CD8-positive, alpha-beta T cell (primary cell): ENCODE measurements at regions of chr2 and their contacts with region 1.

Region 1: DNA sequence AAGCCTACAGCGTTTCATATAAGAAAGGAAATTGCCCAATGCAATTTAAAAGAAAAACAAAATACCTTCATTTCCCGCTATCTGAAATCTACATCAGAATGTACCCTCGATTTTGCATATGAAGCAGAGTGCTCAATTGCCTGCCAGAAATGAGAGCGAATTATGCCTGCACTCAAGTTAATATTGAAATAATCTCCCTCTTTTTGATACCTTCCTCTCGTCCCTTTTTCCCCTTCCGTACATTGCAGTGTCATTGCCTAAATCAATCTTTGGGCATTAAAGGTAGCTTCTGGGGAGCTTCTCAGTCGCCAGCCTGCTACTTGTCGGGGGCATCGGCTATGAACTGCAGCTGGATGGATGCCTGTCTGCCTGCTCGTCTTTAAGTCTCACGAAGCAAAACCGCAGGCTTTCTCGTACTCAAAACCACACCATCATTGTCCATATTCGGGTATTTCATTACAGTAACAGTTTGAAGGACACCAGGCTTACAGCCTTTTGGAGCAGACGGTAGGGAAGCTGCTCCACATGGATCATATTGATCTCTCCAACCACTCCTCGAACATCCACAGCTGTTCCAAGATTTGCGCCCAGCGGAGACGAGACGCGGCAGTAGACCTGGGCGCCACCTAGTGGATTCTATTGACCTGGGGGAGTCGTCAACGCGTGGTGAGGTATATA is 64.0 kb upstream of the HNRNPA3 start:
- DNase-seq: peak; percentile 47 to 84 (median 75)
- ATAC-seq: peak; percentile 89
- H3K4me3 ChIP-seq: peak overlapping the region; percentile 58 to 69
- H3K4me3 Mint-ChIP-seq: peak overlapping the region; percentile 86
- H3K27ac ChIP-seq: no peak overlapping the region
- H3K27ac Mint-ChIP-seq: no peak overlapping the region
- H3K4me1 ChIP-seq: peaks cover 11% of the 10 kb centered on the region
- H3K4me1 Mint-ChIP-seq: peaks cover 14% of the 10 kb centered on the region
- H3K27me3 ChIP-seq: peaks cover 6 to 14% of the 10 kb centered on the region in 2 experiments
- H3K27me3 Mint-ChIP-seq: peaks cover 29% of the 10 kb centered on the region
- CTCF ChIP-seq: peak; percentile 94

Region 2: DNA sequence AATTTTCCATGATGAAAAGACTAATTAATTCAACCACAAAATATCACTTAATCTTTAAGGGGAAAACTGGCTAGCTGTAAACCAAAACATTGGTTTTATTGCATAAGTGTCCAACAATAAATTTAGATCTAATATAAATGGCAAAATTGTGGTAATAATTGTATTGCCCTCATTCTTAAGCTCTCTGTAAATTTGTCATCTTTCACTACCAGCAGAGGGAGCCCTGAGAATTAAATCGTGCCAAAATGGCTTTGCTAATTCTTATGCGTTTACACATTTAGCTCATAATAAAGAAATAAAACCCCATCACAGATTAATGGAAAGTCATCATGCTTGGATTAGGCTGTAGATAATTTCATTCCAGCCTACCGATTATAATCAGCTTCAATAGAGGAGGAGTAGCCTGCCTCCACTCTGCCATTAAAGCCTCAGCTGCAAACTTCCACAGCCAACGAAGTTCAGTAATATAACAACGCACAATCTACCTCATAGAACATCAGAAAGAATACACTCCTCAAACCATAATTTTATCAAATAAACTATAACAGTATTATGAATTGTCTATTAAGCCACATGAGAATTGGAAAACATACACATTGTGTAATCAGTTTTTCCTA is 1897.1 kb before region 1 on chr2:
- CTCF ChIA-PET with region 1: no interaction called
- POLR2A ChIA-PET with region 1: no interaction called
- intact Hi-C with region 1: loop called in 1 of 2 experiments (anchors 5 kb)
- DNase-seq: peak in 3 of 9 experiments; percentile 5 to 43 (median 24)
- ATAC-seq: no peak
- H3K4me3 ChIP-seq: no peak overlapping the region
- H3K4me3 Mint-ChIP-seq: no peak overlapping the region
- H3K27ac ChIP-seq: no peak overlapping the region
- H3K27ac Mint-ChIP-seq: no peak overlapping the region
- H3K4me1 ChIP-seq: no peaks in the 10 kb centered on the region
- H3K4me1 Mint-ChIP-seq: peaks cover 4% of the 10 kb centered on the region
- H3K27me3 ChIP-seq: peaks cover 0 to 2% of the 10 kb centered on the region in 2 experiments
- H3K27me3 Mint-ChIP-seq: peaks cover 25% of the 10 kb centered on the region
- CTCF ChIP-seq: peak; percentile 49

Region 3: GRCh38 chr2:176001916-176002687 is 1146.5 kb before region 1 on chr2 and contains the start of gene LNPK:
- CTCF ChIA-PET with region 1: no interaction called
- POLR2A ChIA-PET with region 1: no interaction called
- intact Hi-C with region 1: loop called in 1 of 2 experiments (anchors 10 kb)
- DNase-seq: peak; percentile 84 to 95 (median 92)
- ATAC-seq: peak; percentile 88
- H3K4me3 ChIP-seq: peak within 1 kb of the TSS; percentile 69 to 79
- H3K4me3 Mint-ChIP-seq: peak within 1 kb of the TSS; percentile 90
- H3K27ac ChIP-seq: peak within 1 kb of the TSS; percentile 63 to 71
- H3K27ac Mint-ChIP-seq: peak within 1 kb of the TSS; percentile 97
- H3K4me1 ChIP-seq: peaks cover 10% of the 10 kb centered on the region
- H3K4me1 Mint-ChIP-seq: peaks cover 31% of the 10 kb centered on the region
- H3K27me3 ChIP-seq: no peaks in the 10 kb centered on the region
- H3K27me3 Mint-ChIP-seq: no peaks in the 10 kb centered on the region
- CTCF ChIP-seq: no peak
- total RNA-seq, gene LNPK: 16.9 TPM

Region 4: GRCh38 chr2:176280867-176281658 is 867.6 kb before region 1 on chr2:
- CTCF ChIA-PET with region 1: no interaction called
- POLR2A ChIA-PET with region 1: no interaction called
- intact Hi-C with region 1: loop called in 1 of 2 experiments (anchors 10 kb)
- DNase-seq: no peak
- ATAC-seq: no peak
- H3K4me3 ChIP-seq: no peak overlapping the region
- H3K4me3 Mint-ChIP-seq: no peak overlapping the region
- H3K27ac ChIP-seq: no peak overlapping the region
- H3K27ac Mint-ChIP-seq: no peak overlapping the region
- H3K4me1 ChIP-seq: peaks cover 17% of the 10 kb centered on the region
- H3K4me1 Mint-ChIP-seq: peaks cover 47% of the 10 kb centered on the region
- H3K27me3 ChIP-seq: no peaks in the 10 kb centered on the region
- H3K27me3 Mint-ChIP-seq: no peaks in the 10 kb centered on the region
- CTCF ChIP-seq: no peak

Region 5: DNA sequence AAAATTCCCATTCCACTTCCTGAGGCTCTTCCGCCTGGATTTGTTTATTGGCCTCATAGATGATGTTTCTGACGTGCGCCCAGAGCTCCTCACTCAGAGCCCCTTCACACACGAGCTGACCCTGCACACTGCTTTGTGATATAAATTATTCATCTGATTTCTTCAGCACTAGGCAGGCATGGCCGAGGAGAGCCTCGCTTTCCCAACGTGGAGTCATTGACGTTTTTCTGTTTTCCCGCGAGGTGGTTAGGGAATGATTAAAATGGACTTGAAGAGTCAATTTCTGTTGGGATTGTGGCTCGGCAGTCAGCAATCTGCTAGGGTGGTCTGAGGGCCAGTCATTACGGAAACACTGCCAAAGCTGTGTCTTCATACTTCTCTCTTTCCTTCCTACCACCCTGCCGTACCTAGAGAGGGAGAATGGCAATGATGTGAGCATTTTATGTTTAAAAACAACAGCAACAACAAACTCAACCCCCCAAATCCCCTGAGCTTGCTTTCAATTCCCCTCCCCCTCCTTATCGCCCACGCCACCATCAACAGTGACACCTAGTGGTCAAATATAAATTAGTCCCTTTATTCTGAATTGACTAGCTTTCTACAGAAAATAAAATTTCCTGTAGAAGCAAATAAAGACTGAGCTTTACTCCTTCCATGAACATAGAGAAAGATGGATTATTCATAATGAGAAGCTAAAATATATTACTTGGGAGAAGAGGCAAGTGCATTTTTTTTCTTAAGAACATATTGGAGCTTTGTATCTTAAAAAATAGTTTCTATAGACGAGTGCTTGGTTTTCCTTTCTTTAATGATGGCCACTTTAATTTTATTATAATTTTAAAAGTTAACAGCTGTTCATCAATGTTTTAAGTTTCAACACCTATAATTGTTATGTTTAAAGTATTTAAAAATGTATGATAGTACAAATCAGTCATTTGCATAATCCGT is 594.2 kb before region 1 on chr2:
- CTCF ChIA-PET with region 1: no interaction called
- POLR2A ChIA-PET with region 1: no interaction called
- intact Hi-C with region 1: loop called in 1 of 2 experiments (anchors 5 kb)
- DNase-seq: peak in 6 of 9 experiments; percentile 16 to 72 (median 40)
- ATAC-seq: peak; percentile 59
- H3K4me3 ChIP-seq: peak overlapping the region; percentile 47 to 51
- H3K4me3 Mint-ChIP-seq: peak overlapping the region; percentile 84
- H3K27ac ChIP-seq: no peak overlapping the region
- H3K27ac Mint-ChIP-seq: no peak overlapping the region
- H3K4me1 ChIP-seq: no peaks in the 10 kb centered on the region
- H3K4me1 Mint-ChIP-seq: peaks cover 11% of the 10 kb centered on the region
- H3K27me3 ChIP-seq: peaks cover 3% of the 10 kb centered on the region in 2 experiments
- H3K27me3 Mint-ChIP-seq: peaks cover 42% of the 10 kb centered on the region
- CTCF ChIP-seq: peak; percentile 77

Region 6: GRCh38 chr2:176745543-176746200 is 402.9 kb before region 1 on chr2:
- CTCF ChIA-PET with region 1: interaction called, 3 read pairs
- POLR2A ChIA-PET with region 1: no interaction called
- intact Hi-C with region 1: loop called in 1 of 2 experiments (anchors 2 kb)
- DNase-seq: no peak
- ATAC-seq: no peak
- H3K4me3 ChIP-seq: no peak overlapping the region
- H3K4me3 Mint-ChIP-seq: no peak overlapping the region
- H3K27ac ChIP-seq: no peak overlapping the region
- H3K27ac Mint-ChIP-seq: no peak overlapping the region
- H3K4me1 ChIP-seq: no peaks in the 10 kb centered on the region
- H3K4me1 Mint-ChIP-seq: peaks cover 6% of the 10 kb centered on the region
- H3K27me3 ChIP-seq: no peaks in the 10 kb centered on the region
- H3K27me3 Mint-ChIP-seq: peaks cover 2% of the 10 kb centered on the region
- CTCF ChIP-seq: no peak

Region 7: DNA sequence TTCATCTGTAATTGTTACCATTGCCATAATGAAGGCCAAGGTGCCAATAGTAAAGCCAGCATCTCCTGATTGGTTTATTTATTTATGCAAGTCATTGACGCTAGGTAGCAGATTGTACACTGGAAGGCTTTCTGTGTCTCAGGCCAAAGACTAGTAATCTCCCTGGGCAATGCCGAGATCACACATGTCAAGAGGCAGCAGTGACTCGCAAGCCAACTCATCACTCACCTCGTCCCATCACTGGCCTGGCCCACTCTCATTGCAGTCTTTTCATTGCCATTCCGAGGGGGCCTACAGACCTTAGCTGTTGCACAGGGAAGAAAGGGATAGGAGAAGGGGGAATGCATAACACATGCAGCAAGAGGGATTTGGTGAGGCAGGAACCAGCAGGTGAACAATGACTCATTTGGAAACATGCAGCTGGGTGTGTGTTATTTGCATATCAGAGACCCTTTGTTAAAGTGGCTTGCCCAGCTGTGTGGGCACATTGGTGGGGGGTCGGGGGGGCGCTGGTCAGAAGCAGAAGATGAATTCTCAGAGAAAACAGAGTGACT is 384.7 kb before region 1 on chr2:
- CTCF ChIA-PET with region 1: no interaction called
- POLR2A ChIA-PET with region 1: no interaction called
- intact Hi-C with region 1: no loop called
- DNase-seq: no peak
- ATAC-seq: no peak
- H3K4me3 ChIP-seq: no peak overlapping the region
- H3K4me3 Mint-ChIP-seq: no peak overlapping the region
- H3K27ac ChIP-seq: no peak overlapping the region
- H3K27ac Mint-ChIP-seq: no peak overlapping the region
- H3K4me1 ChIP-seq: no peaks in the 10 kb centered on the region
- H3K4me1 Mint-ChIP-seq: peaks cover 4% of the 10 kb centered on the region
- H3K27me3 ChIP-seq: no peaks in the 10 kb centered on the region
- H3K27me3 Mint-ChIP-seq: peaks cover 17% of the 10 kb centered on the region
- CTCF ChIP-seq: no peak

Region 8: DNA sequence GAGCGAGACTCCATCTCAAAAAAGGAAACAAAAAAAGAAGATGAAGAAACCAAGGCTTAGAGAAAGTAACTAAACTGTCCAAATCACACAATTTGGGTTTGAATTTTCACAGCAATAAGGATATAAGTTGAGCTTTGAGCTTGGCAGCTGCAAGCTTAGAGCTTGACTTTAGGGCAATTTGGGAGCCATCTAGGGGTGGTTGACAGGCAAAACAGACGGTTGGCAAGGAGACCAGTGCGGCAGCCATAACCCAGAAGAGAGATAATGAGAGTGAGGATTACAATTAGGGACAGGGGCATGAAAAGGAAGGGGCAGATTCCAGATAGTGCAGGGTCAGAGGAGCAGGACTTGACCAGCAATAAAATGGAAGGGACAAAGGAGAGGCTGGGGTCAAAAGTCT is 318.3 kb before region 1 on chr2:
- CTCF ChIA-PET with region 1: interaction called, 3 read pairs
- POLR2A ChIA-PET with region 1: no interaction called
- intact Hi-C with region 1: loop called in 1 of 2 experiments (anchors 5 kb)
- DNase-seq: peak in 5 of 9 experiments; percentile 41 to 68 (median 56)
- ATAC-seq: peak; percentile 53
- H3K4me3 ChIP-seq: no peak overlapping the region
- H3K4me3 Mint-ChIP-seq: no peak overlapping the region
- H3K27ac ChIP-seq: no peak overlapping the region
- H3K27ac Mint-ChIP-seq: no peak overlapping the region
- H3K4me1 ChIP-seq: peaks cover 31% of the 10 kb centered on the region
- H3K4me1 Mint-ChIP-seq: peaks cover 43% of the 10 kb centered on the region
- H3K27me3 ChIP-seq: no peaks in the 10 kb centered on the region
- H3K27me3 Mint-ChIP-seq: no peaks in the 10 kb centered on the region
- CTCF ChIP-seq: no peak

Region 9: DNA sequence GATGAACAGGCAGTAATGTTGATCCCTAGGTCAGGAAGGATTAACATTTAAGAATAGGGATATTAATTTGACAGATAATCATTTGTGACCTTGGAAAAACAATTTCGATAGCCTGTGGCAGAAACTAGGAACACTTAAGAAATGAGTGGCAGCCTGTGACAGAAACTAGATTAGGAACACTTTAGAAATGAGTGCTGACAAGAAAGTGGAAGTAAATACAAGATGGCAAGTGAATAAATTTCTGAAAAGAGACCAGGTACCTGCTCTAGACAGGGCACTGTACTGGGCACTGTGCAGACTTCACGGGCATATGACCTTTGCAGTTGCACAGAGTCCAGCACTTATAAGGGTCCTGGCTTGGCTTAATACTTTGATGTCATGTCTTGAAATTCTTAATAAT is 58.5 kb after region 1 on chr2:
- CTCF ChIA-PET with region 1: no interaction called
- POLR2A ChIA-PET with region 1: no interaction called
- intact Hi-C with region 1: no loop called
- DNase-seq: no peak
- ATAC-seq: no peak
- H3K4me3 ChIP-seq: no peak overlapping the region
- H3K4me3 Mint-ChIP-seq: no peak overlapping the region
- H3K27ac ChIP-seq: no peak overlapping the region
- H3K27ac Mint-ChIP-seq: no peak overlapping the region
- H3K4me1 ChIP-seq: peaks cover 15% of the 10 kb centered on the region
- H3K4me1 Mint-ChIP-seq: peaks cover 20% of the 10 kb centered on the region
- H3K27me3 ChIP-seq: no peaks in the 10 kb centered on the region
- H3K27me3 Mint-ChIP-seq: no peaks in the 10 kb centered on the region
- CTCF ChIP-seq: no peak